HEK293T (cell line): ENCODE measurements at regions of chr10 and their contacts with region 1.

Region 1: DNA sequence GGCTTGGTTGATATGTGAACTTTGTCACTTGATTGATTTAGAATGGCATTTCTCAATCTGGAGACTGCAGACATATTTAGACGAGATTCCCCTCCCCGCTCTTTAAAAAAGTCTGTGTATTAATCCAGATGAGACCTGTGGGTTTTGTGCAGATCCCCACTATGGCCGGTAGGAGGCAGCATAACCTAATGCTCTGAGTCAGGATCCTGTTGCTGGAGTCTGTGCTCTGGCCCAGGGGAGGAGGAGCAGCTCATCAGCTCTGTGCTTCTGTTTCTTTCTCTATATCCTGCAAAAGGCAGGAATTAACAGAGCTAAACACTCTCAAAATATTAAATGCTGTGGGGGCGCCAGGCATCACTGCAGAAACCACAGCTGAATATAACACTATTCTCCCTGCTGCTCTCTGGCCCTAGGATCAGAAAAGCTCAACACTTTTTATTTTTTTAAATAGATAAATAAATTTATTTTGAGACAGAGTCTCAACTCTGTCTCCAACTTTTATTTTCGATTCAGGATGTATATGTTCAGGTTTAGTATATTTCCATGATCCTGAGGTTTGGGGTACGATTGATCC is 23.9 kb upstream of the SEPHS1 start:
- DNase-seq: peak; percentile 90

Region 2: GRCh38 chr10:13239923-13240322 is 132.1 kb before region 1 on chr10:
- CTCF ChIA-PET with region 1: interaction called, 11 read pairs
- POLR2A ChIA-PET with region 1: no interaction called
- DNase-seq: no peak

Region 3: GRCh38 chr10:13263591-13263990 is 108.4 kb before region 1 on chr10:
- CTCF ChIA-PET with region 1: no interaction called
- POLR2A ChIA-PET with region 1: no interaction called
- DNase-seq: no peak

Region 4: DNA sequence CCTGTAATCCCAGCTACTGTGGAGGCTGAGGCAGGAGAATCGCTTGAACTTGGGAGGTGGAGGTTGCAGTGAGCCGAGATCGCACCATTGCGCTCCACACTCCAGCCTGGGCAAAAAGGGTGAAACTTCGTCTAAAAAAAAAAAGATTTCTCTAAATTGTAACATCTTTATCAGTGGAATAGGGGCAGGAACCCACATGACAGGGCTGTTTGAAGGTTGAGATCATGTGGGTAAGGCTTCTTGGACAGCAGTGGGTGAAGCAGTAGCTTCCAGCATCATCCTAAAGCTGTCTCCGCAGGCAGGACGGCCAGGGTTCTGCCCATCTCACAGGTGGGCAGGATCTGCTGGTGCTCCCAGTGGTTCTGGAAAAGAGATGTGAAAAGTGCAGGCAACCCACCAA is 14.0 kb after region 1 on chr10:
- CTCF ChIA-PET with region 1: interaction called, 10 read pairs
- POLR2A ChIA-PET with region 1: no interaction called
- DNase-seq: no peak

Region 5: DNA sequence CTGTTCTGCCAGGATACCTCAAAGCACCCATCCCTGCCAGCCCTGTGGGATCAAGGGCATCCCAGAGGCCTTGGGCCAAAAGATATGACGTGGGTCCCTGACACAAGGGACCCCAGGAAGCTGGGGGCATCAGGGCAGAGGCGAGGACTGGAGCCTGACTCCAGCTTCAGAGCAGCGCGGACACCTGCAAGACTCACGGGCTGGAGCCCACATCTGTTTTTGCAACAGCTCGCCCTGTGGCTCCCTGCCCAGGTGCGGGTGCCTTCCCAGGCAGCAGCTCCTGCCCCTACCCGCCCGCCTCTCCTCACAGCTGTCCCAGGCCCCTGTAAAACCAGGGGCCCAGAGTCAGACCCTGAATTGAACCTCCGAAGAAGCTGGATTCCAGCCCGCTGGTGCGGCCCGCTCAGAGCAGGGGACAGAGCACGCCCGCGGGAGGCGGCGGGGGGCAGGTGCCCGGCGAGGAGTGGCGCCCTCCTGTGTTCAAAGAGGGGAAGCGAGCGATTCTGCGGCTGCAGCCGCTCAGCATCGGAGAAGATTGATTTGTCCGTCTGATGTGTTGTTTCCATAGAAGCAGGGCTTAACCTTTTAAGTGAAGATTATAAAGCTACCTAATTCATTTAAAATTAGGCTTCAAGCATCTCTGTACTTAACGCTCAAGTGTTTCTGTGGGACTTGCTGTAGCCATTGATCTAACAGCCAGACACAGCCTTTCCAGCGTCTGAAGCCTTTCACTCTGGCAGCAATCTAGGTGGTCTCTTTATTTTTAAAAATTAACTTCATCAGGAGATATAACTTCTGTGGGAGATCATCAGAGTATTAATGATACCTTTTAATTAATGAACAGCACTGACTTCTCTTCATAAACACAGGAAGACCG is 68.4 kb after region 1 on chr10:
- CTCF ChIA-PET with region 1: interaction called, 17 read pairs
- POLR2A ChIA-PET with region 1: interaction called, 6 read pairs
- DNase-seq: peak; percentile 88

Region 6: GRCh38 chr10:13536674-13537366 is 164.8 kb after region 1 on chr10:
- CTCF ChIA-PET with region 1: interaction called, 18 read pairs
- POLR2A ChIA-PET with region 1: no interaction called
- DNase-seq: peak; percentile 85